ENCODE measurements at regions of chr16 and their contacts with region 1.

Region 1: GRCh38 chr16:8878521-8878911 is 3.6 kb upstream of the LITAFD start:
- DNase-seq: no peak
- ATAC-seq: no peak
- H3K4me3 ChIP-seq: no peak overlapping the region
- H3K27ac ChIP-seq: no peak overlapping the region
- H3K4me1 ChIP-seq: peaks cover 0 to 6% of the 10 kb centered on the region in 2 experiments; a peak in 2 of 5 replicates
- H3K27me3 ChIP-seq: peaks cover 0 to 12% of the 10 kb centered on the region in 2 experiments; a peak in 3 of 5 replicates
- CTCF ChIP-seq: no peak
- EP300 ChIP-seq: no peak
- POLR2A ChIP-seq: no peak
- RAD21 ChIP-seq: no peak

Region 2: GRCh38 chr16:8572919-8573724 is 305.4 kb before region 1 on chr16:
- CTCF ChIA-PET with region 1: interaction called, 19 read pairs
- POLR2A ChIA-PET with region 1: no interaction called
- in situ Hi-C with region 1: loop called (anchors 5 kb)
- intact Hi-C with region 1: loop called (anchors 5 kb)
- DNase-seq: peak; percentile 31 to 47 (median 36)
- ATAC-seq: peak; percentile 82
- H3K4me3 ChIP-seq: no peak overlapping the region
- H3K27ac ChIP-seq: no peak overlapping the region
- H3K4me1 ChIP-seq: peaks cover 0 to 8% of the 10 kb centered on the region in 2 experiments; a peak in 1 of 5 replicates
- H3K27me3 ChIP-seq: peaks cover 12 to 41% of the 10 kb centered on the region in 2 experiments
- CTCF ChIP-seq: peak; percentile 66 to 78 (median 77)
- EP300 ChIP-seq: 0 out of 2 replicates have a peak, but pooled peaks have one; percentile 10
- POLR2A ChIP-seq: no peak
- RAD21 ChIP-seq: peak; percentile 40 to 88

Region 3: DNA sequence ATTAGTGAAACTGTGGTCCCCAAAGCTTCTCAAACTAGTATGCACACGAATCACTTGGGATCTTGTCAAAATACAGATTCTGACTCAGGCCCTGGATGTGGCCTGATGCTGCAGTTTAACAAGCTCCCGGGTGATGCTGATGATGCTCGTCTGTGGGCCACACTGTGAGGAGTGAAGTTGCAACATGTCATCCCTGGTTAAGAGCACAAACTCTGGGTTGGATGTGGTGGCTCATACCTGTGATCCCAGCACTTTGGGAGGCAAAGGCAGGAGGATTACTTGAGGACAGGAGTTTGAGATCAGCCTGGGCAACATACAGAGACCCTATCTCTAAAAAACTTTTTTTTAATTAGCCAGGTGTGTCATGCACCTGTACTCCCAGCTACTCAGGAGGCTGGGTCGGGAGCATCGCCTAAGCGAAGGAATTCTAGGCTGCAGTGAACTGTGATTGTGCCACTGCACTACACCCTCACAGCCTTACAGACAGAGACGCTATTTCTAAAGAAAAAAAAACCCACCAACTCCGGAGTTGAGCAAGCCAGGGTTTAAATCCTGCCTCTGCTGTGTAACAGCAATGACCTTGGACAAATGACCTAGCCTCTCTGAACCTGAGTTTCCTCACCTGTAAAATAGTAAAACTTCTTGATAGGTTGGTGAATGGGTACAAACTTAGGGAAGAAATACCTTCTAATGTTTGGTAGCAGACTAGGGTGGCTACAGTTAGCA is 228.5 kb before region 1 on chr16:
- CTCF ChIA-PET with region 1: no interaction called
- POLR2A ChIA-PET with region 1: interaction called, 4 read pairs
- in situ Hi-C with region 1: loop called (anchors 5 kb)
- intact Hi-C with region 1: no loop called
- DNase-seq: no peak
- ATAC-seq: no peak
- H3K4me3 ChIP-seq: no peak overlapping the region
- H3K27ac ChIP-seq: no peak overlapping the region
- H3K4me1 ChIP-seq: peaks cover 2 to 8% of the 10 kb centered on the region in 2 experiments; a peak in 4 of 5 replicates
- H3K27me3 ChIP-seq: no peaks in the 10 kb centered on the region
- CTCF ChIP-seq: no peak
- EP300 ChIP-seq: no peak
- POLR2A ChIP-seq: 0 out of 2 replicates have a peak, but pooled peaks have one; percentile 10
- RAD21 ChIP-seq: no peak

Region 4: GRCh38 chr16:8660841-8661301 is 217.6 kb before region 1 on chr16:
- CTCF ChIA-PET with region 1: interaction called, 4 read pairs
- POLR2A ChIA-PET with region 1: interaction called, 3 read pairs
- in situ Hi-C with region 1: no loop called
- intact Hi-C with region 1: loop called (anchors 1 kb)
- DNase-seq: peak; percentile 36 to 65 (median 48)
- ATAC-seq: peak; percentile 91
- H3K4me3 ChIP-seq: no peak overlapping the region
- H3K27ac ChIP-seq: no peak overlapping the region
- H3K4me1 ChIP-seq: no peaks in the 10 kb centered on the region
- H3K27me3 ChIP-seq: peaks cover 4 to 18% of the 10 kb centered on the region in 2 experiments; a peak in 2 of 5 replicates
- CTCF ChIP-seq: peak; percentile 71 to 72 (median 71)
- EP300 ChIP-seq: no peak
- POLR2A ChIP-seq: no peak
- RAD21 ChIP-seq: peak; percentile 55 to 86

Region 5: GRCh38 chr16:8797364-8798173 is 80.9 kb before region 1 on chr16 and contains the starts of genes PMM2 and TMEM186:
- CTCF ChIA-PET with region 1: no interaction called
- POLR2A ChIA-PET with region 1: interaction called, 3 read pairs
- in situ Hi-C with region 1: no loop called
- intact Hi-C with region 1: loop called (anchors 5 kb)
- DNase-seq: peak; percentile 95 to 98 (median 96)
- ATAC-seq: peak; percentile 99
- H3K4me3 ChIP-seq: peak within 1 kb of the TSS; percentile 69
- H3K27ac ChIP-seq: peak within 1 kb of the TSS; percentile 88
- H3K4me1 ChIP-seq: peaks cover 12 to 13% of the 10 kb centered on the region in 2 experiments; a peak in 4 of 5 replicates
- H3K27me3 ChIP-seq: no peaks in the 10 kb centered on the region
- CTCF ChIP-seq: no peak
- EP300 ChIP-seq: no peak
- POLR2A ChIP-seq: peak; percentile 92
- RAD21 ChIP-seq: no peak
- polyA plus RNA-seq, gene PMM2: 5.6 to 7.8 TPM
- polyA plus RNA-seq, gene TMEM186: 27.3 to 33.4 TPM

Region 6: DNA sequence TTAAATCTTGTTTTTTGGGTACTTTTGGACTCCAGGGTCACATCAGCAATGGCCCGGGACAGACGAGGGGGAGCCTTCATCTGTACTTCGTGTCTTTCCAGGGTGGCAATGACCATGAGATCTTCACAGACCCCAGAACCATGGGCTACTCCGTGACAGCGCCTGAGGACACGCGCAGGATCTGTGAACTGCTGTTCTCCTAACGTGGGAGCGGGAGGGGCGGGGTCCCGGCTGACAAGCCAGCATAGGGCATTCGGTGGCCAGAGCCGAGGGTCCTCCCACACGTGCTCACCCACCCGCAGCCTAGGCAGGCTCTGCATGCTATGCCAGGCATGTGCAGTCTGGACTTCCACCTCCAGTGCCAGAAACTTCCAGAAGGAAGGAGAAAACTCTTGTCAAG is 30.9 kb before region 1 on chr16:
- CTCF ChIA-PET with region 1: no interaction called
- POLR2A ChIA-PET with region 1: no interaction called
- in situ Hi-C with region 1: no loop called
- intact Hi-C with region 1: no loop called
- DNase-seq: no peak
- ATAC-seq: no peak
- H3K4me3 ChIP-seq: no peak overlapping the region
- H3K27ac ChIP-seq: no peak overlapping the region
- H3K4me1 ChIP-seq: peaks cover 0 to 4% of the 10 kb centered on the region in 2 experiments; a peak in 1 of 5 replicates
- H3K27me3 ChIP-seq: no peaks in the 10 kb centered on the region
- CTCF ChIP-seq: no peak
- EP300 ChIP-seq: no peak
- POLR2A ChIP-seq: no peak
- RAD21 ChIP-seq: no peak

Region 7: DNA sequence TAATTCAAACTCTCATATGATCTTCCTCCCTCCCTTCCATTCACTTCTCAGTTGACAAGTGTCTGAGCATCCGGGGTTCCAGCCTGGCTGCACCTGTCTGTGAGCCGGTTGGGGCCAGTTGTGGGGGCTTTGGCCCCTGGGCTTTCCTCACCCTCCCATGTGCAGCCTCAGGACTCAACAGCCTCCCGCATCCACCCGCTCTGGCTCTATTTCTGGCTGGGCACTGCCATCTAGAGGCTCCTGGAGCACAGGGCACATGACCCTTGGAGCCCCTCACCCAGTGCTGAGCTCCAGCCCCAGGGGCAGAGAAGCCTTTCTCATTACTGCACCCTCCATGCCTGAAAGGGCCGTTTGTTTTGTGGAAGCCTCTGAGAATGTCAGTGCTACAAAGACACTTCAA is 256.2 kb after region 1 on chr16:
- CTCF ChIA-PET with region 1: no interaction called
- POLR2A ChIA-PET with region 1: no interaction called
- in situ Hi-C with region 1: no loop called
- intact Hi-C with region 1: loop called (anchors 10 kb)
- DNase-seq: peak in 3 of 4 experiments; percentile 15 to 54 (median 53)
- ATAC-seq: peak; percentile 82
- H3K4me3 ChIP-seq: no peak overlapping the region
- H3K27ac ChIP-seq: no peak overlapping the region
- H3K4me1 ChIP-seq: peaks cover 3 to 8% of the 10 kb centered on the region in 2 experiments; a peak in 3 of 5 replicates
- H3K27me3 ChIP-seq: no peaks in the 10 kb centered on the region
- CTCF ChIP-seq: peak; percentile 61 to 78 (median 71)
- EP300 ChIP-seq: no peak
- POLR2A ChIP-seq: no peak
- RAD21 ChIP-seq: peak in 1 of 2 experiments; percentile 63; a peak in 2 of 4 replicates

Region 8: GRCh38 chr16:9159839-9160550 is 281.5 kb after region 1 on chr16:
- CTCF ChIA-PET with region 1: no interaction called
- POLR2A ChIA-PET with region 1: no interaction called
- in situ Hi-C with region 1: no loop called
- intact Hi-C with region 1: no loop called
- DNase-seq: peak; percentile 58 to 72 (median 65)
- ATAC-seq: peak; percentile 95
- H3K4me3 ChIP-seq: no peak overlapping the region
- H3K27ac ChIP-seq: no peak overlapping the region
- H3K4me1 ChIP-seq: no peaks in the 10 kb centered on the region; a peak in 1 of 5 replicates
- H3K27me3 ChIP-seq: peaks cover 22 to 30% of the 10 kb centered on the region in 2 experiments
- CTCF ChIP-seq: peak; percentile 77 to 82 (median 80)
- EP300 ChIP-seq: no peak
- POLR2A ChIP-seq: no peak
- RAD21 ChIP-seq: peak; percentile 31 to 78; a peak in 3 of 4 replicates

Measured in K562 (cell line).